ENCODE measurements at regions of chr1 and their contacts with region 1.

Region 1: DNA sequence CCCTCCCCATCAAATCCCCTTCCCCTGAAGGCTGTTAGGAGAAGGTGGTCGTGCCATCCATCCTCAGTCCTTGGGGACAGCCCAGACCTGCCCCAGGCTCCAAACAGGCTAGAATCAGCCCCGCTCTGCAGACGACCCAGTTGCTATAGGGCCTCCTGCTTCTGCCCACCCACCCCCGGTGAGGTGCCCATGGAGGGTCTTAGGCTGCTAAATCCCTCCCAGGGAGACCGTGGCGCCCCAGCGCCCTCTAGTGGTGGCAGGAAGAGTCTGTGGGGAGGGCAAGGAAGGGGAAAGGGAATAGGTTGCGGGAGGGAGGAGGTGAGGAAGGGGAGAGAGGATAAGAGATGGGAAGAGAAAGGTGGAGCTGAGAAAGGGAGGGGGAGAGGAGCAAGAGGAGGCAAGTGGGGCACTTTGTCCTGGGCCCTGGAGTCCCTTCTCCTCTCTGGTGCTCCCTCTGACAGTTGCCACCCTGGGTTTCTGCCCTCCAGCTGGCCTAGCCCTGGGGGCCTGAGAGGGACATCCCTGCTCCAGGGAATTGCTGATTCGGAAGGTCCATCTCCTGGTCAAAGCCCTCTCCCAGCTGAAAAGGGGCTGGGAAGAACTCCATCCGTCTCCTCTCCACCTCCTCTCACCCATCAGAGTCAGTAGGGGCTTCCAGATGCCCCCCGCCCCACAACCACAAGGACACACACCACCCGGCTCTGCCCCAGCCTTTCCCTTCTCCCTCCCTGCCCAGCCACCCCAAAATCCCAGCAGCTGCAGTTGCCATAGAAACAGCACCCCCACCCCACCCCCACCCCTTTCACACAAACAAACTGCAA is 55.4 kb downstream of the CAMK2N1 start:
- DNase-seq: no peak
- ATAC-seq: peak; percentile 63
- H3K4me3 ChIP-seq: no peak overlapping the region
- H3K27ac ChIP-seq: no peak overlapping the region
- H3K4me1 ChIP-seq: peaks cover 8% of the 10 kb centered on the region
- H3K27me3 ChIP-seq: 0 out of 4 replicates have a peak, but pooled peaks cover 0 to 2% of the 10 kb centered on the region in 2 experiments
- CTCF ChIP-seq: peak; percentile 57 to 83 (median 66)
- EP300 ChIP-seq: no peak
- POLR2A ChIP-seq: no peak
- RAD21 ChIP-seq: peak; percentile 90

Region 2: GRCh38 chr1:20413136-20413775 is 17.3 kb before region 1 on chr1:
- CTCF ChIA-PET with region 1: interaction called, 10 read pairs
- POLR2A ChIA-PET with region 1: no interaction called
- RAD21 ChIA-PET with region 1: interaction called, 3 read pairs
- SMC1A ChIA-PET with region 1: no interaction called
- in situ Hi-C with region 1: no loop called
- intact Hi-C with region 1: no loop called
- DNase-seq: no peak
- ATAC-seq: no peak
- H3K4me3 ChIP-seq: no peak overlapping the region
- H3K27ac ChIP-seq: no peak overlapping the region
- H3K4me1 ChIP-seq: no peaks in the 10 kb centered on the region
- H3K27me3 ChIP-seq: no peaks in the 10 kb centered on the region; a peak in 1 of 4 replicates
- CTCF ChIP-seq: no peak
- EP300 ChIP-seq: no peak
- POLR2A ChIP-seq: no peak
- RAD21 ChIP-seq: no peak